Activated B cell treated with CpG ODN at 0.5 μM for 24 hours (primary cell): ENCODE measurements at regions of chr14 and their contacts with region 1.

Region 1: DNA sequence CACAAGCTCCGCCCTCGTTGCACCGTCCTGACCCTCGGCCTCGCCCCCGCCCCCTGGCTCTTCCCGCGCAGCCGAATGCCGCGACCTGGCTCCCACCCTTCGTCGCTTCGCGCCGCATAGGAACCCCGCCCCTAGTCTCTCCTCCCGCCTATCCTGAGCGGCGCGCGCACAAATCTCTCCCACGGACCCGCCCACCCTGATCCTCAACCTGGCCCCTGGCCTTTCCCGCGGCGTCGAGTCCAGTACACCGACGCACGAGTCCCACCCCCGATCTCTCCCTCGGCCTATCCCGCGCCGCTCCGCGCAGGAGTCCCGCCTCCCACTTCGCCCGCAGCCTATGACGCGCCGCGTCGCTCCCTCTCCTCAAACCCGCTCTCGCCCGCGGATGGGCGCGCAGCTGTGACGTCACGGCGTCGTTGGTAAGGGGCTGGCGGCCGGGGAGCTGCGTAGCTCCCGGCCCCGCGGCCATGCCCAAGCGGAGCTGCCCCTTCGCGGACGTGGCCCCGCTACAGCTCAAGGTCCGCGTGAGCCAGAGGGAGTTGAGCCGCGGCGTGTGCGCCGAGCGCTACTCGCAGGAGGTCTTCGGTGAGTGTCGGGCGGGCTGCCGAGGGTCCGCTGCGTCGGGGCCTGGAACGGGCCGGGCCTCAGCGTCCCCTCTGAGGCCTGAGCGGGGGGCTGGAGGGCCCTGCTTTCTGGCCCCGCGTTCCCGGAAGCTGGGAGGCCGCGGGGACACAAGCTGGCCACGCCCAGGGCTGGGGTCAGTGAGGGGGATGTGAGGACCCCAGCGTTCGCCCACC is at the start of gene SIVA1:
- DNase-seq: peak; percentile 98
- ATAC-seq: peak; percentile 89
- H3K4me3 Mint-ChIP-seq: peak within 1 kb of the TSS; percentile 88
- H3K27ac Mint-ChIP-seq: peak within 1 kb of the TSS; percentile 84
- H3K4me1 Mint-ChIP-seq: peaks cover 34% of the 10 kb centered on the region
- H3K27me3 Mint-ChIP-seq: no peaks in the 10 kb centered on the region
- CTCF ChIP-seq: no peak
- total RNA-seq, gene SIVA1: 47.9 and 51.2 TPM in 2 replicates

Region 2: DNA sequence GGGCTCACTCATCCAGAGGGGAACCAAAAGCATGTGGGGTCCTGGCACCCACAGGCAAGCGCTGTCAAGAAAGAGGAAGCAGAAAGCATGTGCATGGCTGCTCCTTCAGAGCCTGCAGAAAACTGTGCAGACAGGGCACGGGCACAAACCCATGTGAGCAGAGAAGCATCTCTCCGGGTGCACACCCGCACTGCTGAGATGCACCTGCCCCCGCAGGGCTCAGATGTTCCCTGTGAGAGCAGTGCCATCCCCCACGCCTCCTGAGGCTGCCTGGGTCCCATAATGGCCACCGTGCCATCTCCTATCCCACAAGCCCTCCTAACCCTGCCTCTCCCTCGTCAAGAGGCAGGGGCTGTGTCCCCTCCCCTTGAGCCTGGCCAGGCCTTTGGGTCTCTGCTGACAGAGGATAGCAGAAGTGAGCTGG is 95.8 kb before region 1 on chr14:
- CTCF ChIA-PET with region 1: no interaction called
- POLR2A ChIA-PET with region 1: interaction called, 14 read pairs
- intact Hi-C with region 1: loop called (anchors 1 kb)
- DNase-seq: peak; percentile 68
- ATAC-seq: peak; percentile 60
- H3K4me3 Mint-ChIP-seq: peak overlapping the region; percentile 79
- H3K27ac Mint-ChIP-seq: peak overlapping the region; percentile 98
- H3K4me1 Mint-ChIP-seq: peaks cover 85% of the 10 kb centered on the region
- H3K27me3 Mint-ChIP-seq: no peaks in the 10 kb centered on the region
- CTCF ChIP-seq: no peak

Region 3: GRCh38 chr14:104677512-104678332 is 75.2 kb before region 1 on chr14:
- CTCF ChIA-PET with region 1: no interaction called
- POLR2A ChIA-PET with region 1: interaction called, 7 read pairs
- intact Hi-C with region 1: loop called (anchors 1 kb)
- DNase-seq: peak; percentile 69
- ATAC-seq: peak; percentile 63
- H3K4me3 Mint-ChIP-seq: peak overlapping the region; percentile 81
- H3K27ac Mint-ChIP-seq: peak overlapping the region; percentile 80
- H3K4me1 Mint-ChIP-seq: peaks cover 52% of the 10 kb centered on the region
- H3K27me3 Mint-ChIP-seq: no peaks in the 10 kb centered on the region
- CTCF ChIP-seq: no peak

Region 4: DNA sequence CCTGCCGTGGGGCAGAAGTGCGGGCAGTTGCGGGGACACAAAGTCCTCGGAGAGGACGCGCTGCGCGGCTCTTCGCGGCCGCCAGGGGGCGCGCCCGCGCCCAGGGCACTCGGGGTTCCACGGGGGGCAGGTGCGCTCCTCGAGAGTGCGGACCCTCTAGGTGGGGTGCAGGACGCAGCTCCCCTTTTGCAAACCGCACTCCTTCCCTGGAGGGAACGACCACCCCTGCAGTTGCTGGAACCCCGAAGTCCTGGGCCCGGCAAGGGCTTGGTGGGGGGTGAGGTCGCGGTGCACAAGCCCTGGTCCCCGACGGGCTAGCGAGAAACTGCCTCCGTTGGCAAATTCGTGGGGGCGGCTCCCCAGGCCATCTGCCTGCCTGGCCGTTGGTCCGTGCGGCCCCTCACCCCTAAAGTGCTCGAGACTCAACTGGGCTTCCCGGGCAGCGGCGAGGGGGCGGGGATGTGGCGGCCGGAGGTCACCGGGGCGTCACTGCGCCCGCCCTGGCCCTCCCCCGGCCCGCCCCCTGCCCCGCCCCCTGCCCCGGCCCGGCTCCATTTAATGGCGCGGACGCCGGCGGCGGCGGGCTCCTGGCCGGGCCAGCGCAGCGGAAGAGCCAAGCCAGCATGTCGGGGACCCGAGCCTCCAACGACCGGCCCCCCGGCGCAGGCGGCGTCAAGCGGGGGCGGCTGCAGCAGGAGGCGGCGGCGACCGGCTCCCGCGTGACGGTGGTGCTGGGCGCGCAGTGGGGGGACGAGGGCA is 29.1 kb before region 1 on chr14 and contains the start of gene ADSS1:
- CTCF ChIA-PET with region 1: interaction called, 9 read pairs
- POLR2A ChIA-PET with region 1: interaction called, 3 read pairs
- intact Hi-C with region 1: loop called (anchors 1 kb)
- DNase-seq: peak; percentile 68
- ATAC-seq: peak; percentile 83
- H3K4me3 Mint-ChIP-seq: peak within 1 kb of the TSS; percentile 78
- H3K27ac Mint-ChIP-seq: no peak within 1 kb of the TSS
- H3K4me1 Mint-ChIP-seq: no peaks in the 10 kb centered on the region
- H3K27me3 Mint-ChIP-seq: peaks cover 5% of the 10 kb centered on the region
- CTCF ChIP-seq: peak; percentile 94
- total RNA-seq, gene ADSS1: 0.18 and 0.39 TPM in 2 replicates

Region 5: GRCh38 chr14:104800015-104800770 is 47.3 kb after region 1 on chr14:
- CTCF ChIA-PET with region 1: no interaction called
- POLR2A ChIA-PET with region 1: interaction called, 8 read pairs
- intact Hi-C with region 1: loop called (anchors 2 kb)
- DNase-seq: peak; percentile 78
- ATAC-seq: peak; percentile 76
- H3K4me3 Mint-ChIP-seq: peak overlapping the region; percentile 73
- H3K27ac Mint-ChIP-seq: peak overlapping the region; percentile 87
- H3K4me1 Mint-ChIP-seq: peaks cover 47% of the 10 kb centered on the region
- H3K27me3 Mint-ChIP-seq: no peaks in the 10 kb centered on the region
- CTCF ChIP-seq: no peak